Motor neuron (in vitro differentiated cells): ENCODE measurements at regions of chr1 and their contacts with region 1.

Region 1: GRCh38 chr1:169586395-169587255 is at the start of gene F5:
- ATAC-seq: peak; percentile 100
- H3K4me3 ChIP-seq: peak within 1 kb of the TSS in 1 of 5 donors; percentile 6
- H3K27ac ChIP-seq: no peak within 1 kb of the TSS
- H3K4me1 ChIP-seq: no peaks in the 10 kb centered on the region
- total RNA-seq, gene F5: 0.07 to 30.1 (median 0.20) TPM in 7 of 8 experiments, not detected in the other

Region 2: GRCh38 chr1:169794530-169795416 is 208.1 kb after region 1 on chr1 and contains the start of gene METTL18:
- in situ Hi-C with region 1: loop called in 1 of 9 experiments (anchors 25 kb)
- ATAC-seq: peak; percentile 99 to 100 (median 99)
- H3K4me3 ChIP-seq: peak within 1 kb of the TSS; percentile 60 to 92 (median 87)
- H3K27ac ChIP-seq: peak within 1 kb of the TSS; percentile 85 to 94
- H3K4me1 ChIP-seq: peaks cover 11 to 13% of the 10 kb centered on the region in 2 donors
- total RNA-seq, gene METTL18: 6.5 to 17.0 (median 9.3) TPM

Region 3: GRCh38 chr1:169809370-169810095 is 222.9 kb after region 1 on chr1:
- in situ Hi-C with region 1: loop called in 1 of 9 experiments (anchors 25 kb)
- ATAC-seq: peak in 5 of 8 experiments; percentile 24 to 43 (median 38)
- H3K4me3 ChIP-seq: no peak overlapping the region
- H3K27ac ChIP-seq: no peak overlapping the region
- H3K4me1 ChIP-seq: no peaks in the 10 kb centered on the region